SK-N-SH (cell line): ENCODE measurements at regions of chr1 and their contacts with region 1.

Region 1: GRCh38 chr1:7975212-7975865 is 13.8 kb downstream of the PARK7 start:
- DNase-seq: peak; percentile 86
- H3K4me3 ChIP-seq: no peak overlapping the region
- H3K27ac ChIP-seq: no peak overlapping the region
- H3K4me1 ChIP-seq: no peaks in the 10 kb centered on the region
- H3K27me3 ChIP-seq: no peaks in the 10 kb centered on the region
- CTCF ChIP-seq: peak; percentile 79
- EP300 ChIP-seq: no peak
- RAD21 ChIP-seq: peak; percentile 81

Region 2: GRCh38 chr1:7961216-7962015 is 13.9 kb before region 1 on chr1 and contains the start of gene PARK7:
- CTCF ChIA-PET with region 1: interaction called, 17 read pairs
- POLR2A ChIA-PET with region 1: interaction called, 5 read pairs
- DNase-seq: peak; percentile 99
- H3K4me3 ChIP-seq: peak within 1 kb of the TSS; percentile 72 to 75
- H3K27ac ChIP-seq: peak within 1 kb of the TSS; percentile 79 to 90
- H3K4me1 ChIP-seq: peaks cover 0 to 4% of the 10 kb centered on the region in 2 experiments; a peak in 2 of 4 replicates
- H3K27me3 ChIP-seq: no peaks in the 10 kb centered on the region
- CTCF ChIP-seq: peak; percentile 40
- EP300 ChIP-seq: no peak; a peak in 1 of 4 replicates
- RAD21 ChIP-seq: no peak
- polyA plus RNA-seq, gene PARK7: 415 and 421 TPM in 2 replicates